ENCODE measurements at regions of chr6 and their contacts with region 1.

Region 1: GRCh38 chr6:35327349-35328027 is 14.9 kb upstream of the PPARD start:
- DNase-seq: peak; percentile 80
- ATAC-seq: peak; percentile 87
- H3K4me3 ChIP-seq: no peak overlapping the region
- H3K4me3 Mint-ChIP-seq: no peak overlapping the region
- H3K27ac ChIP-seq: peak overlapping the region in 1 of 2 donors; percentile 11
- H3K27ac Mint-ChIP-seq: peak overlapping the region; percentile 74
- H3K4me1 ChIP-seq: peaks cover 11 to 15% of the 10 kb centered on the region in 2 donors
- H3K4me1 Mint-ChIP-seq: peaks cover 16% of the 10 kb centered on the region
- H3K27me3 ChIP-seq: no peaks in the 10 kb centered on the region
- H3K27me3 Mint-ChIP-seq: no peaks in the 10 kb centered on the region
- CTCF ChIP-seq: peak; percentile 76

Region 2: DNA sequence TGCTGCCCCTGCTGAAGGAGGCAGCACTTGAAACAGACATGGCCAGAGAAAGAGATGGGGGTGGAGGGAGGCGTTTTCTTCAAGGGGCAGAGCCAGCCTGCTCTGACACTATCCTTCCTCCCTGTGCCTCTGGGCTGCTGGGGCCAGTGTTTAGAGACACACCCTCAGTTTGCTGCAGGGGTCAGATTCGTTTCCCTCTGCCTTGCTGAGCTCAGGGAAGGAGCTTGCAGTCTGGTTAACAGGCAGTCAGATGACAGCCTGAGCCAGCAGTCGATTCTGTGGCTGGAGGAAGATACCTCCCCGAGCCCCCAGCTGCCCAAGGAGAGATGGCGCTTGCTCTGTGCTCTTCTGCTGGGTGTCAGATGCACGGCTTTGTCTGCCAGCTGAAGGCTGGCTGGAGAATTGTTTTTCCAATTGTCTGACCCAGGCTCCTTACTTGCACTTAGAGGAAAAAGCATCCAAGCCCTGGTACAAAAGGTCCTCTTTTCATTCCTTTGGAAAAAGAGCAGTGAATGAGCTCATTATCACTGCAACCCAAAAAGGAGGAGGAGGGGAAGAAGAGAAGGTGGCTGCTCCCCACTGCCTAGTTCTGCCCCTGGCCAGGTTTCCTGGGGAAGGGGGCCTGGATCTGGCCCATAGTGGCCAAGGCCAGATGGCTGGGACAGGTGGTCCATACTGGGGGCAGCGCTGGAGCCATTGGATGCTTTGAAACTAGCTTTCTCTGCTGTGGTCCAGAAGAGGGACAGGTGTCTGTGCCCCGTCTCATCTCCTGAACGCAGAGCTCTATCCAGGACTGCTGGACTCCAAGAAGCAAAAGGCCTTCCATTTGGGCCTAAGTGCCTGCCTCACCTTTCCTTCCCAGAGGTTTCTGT is 274.6 kb before region 1 on chr6:
- CTCF ChIA-PET with region 1: no interaction called
- POLR2A ChIA-PET with region 1: no interaction called
- intact Hi-C with region 1: no loop called
- DNase-seq: no peak
- ATAC-seq: no peak
- H3K4me3 ChIP-seq: no peak overlapping the region
- H3K4me3 Mint-ChIP-seq: no peak overlapping the region
- H3K27ac ChIP-seq: no peak overlapping the region
- H3K27ac Mint-ChIP-seq: no peak overlapping the region
- H3K4me1 ChIP-seq: peaks cover 6 to 11% of the 10 kb centered on the region in 2 donors
- H3K4me1 Mint-ChIP-seq: no peaks in the 10 kb centered on the region
- H3K27me3 ChIP-seq: no peaks in the 10 kb centered on the region
- H3K27me3 Mint-ChIP-seq: no peaks in the 10 kb centered on the region
- CTCF ChIP-seq: no peak

Region 3: GRCh38 chr6:35259194-35259947 is 68.1 kb before region 1 on chr6 and contains the start of gene ZNF76:
- CTCF ChIA-PET with region 1: interaction called, 4 read pairs
- POLR2A ChIA-PET with region 1: no interaction called
- intact Hi-C with region 1: loop called (anchors 2 kb)
- DNase-seq: peak; percentile 97
- ATAC-seq: peak; percentile 81
- H3K4me3 ChIP-seq: peak within 1 kb of the TSS; percentile 63 to 90 (median 81)
- H3K4me3 Mint-ChIP-seq: peak within 1 kb of the TSS; percentile 99
- H3K27ac ChIP-seq: peak within 1 kb of the TSS; percentile 97 to 98
- H3K27ac Mint-ChIP-seq: peak within 1 kb of the TSS; percentile 98
- H3K4me1 ChIP-seq: peaks cover 21 to 30% of the 10 kb centered on the region in 2 donors
- H3K4me1 Mint-ChIP-seq: peaks cover 47% of the 10 kb centered on the region
- H3K27me3 ChIP-seq: no peaks in the 10 kb centered on the region
- H3K27me3 Mint-ChIP-seq: no peaks in the 10 kb centered on the region
- CTCF ChIP-seq: no peak
- total RNA-seq, gene ZNF76: 96.9 and 107 TPM in 2 replicates

Region 4: DNA sequence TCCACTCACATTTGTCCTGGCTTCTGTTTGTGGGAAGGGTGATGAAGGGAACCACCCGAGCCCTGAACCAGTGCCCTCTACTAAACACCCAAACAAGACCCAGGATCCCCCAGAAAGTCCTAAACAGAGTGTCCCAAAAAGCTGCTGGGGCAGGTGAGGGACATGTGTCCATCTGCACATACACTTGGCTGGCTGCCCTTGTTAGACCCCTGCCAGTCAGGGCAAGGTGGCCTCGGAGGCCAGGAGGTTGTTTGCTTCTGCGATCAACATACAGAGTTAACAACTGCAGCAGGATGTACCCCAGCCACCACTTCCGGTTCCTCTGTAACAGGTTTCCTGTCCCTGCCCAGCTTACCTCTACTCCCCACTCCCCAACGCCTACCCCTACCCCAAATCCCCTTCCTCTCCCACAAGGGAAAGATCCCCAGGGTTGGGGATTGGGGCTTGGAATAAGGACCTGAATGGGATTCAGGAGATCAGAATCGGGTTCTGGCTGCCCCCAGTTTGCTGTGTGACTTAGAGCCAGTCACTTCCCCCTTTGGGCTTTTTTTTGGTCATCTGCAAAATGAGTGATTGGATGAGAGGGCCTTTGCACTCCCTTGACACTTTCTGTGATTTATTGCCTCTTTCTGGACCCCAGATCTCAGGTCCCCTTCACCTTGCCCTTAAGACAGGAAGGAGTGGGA is 16.0 kb before region 1 on chr6:
- CTCF ChIA-PET with region 1: interaction called, 14 read pairs
- POLR2A ChIA-PET with region 1: interaction called, 7 read pairs
- intact Hi-C with region 1: loop called (anchors 1 kb)
- DNase-seq: peak; percentile 60
- ATAC-seq: peak; percentile 65
- H3K4me3 ChIP-seq: peak overlapping the region in 4 of 5 experiments; percentile 16 to 48 (median 44)
- H3K4me3 Mint-ChIP-seq: peak overlapping the region; percentile 81
- H3K27ac ChIP-seq: peak overlapping the region; percentile 78 to 89
- H3K27ac Mint-ChIP-seq: peak overlapping the region; percentile 99
- H3K4me1 ChIP-seq: peaks cover 41 to 44% of the 10 kb centered on the region in 2 donors
- H3K4me1 Mint-ChIP-seq: peaks cover 72% of the 10 kb centered on the region
- H3K27me3 ChIP-seq: no peaks in the 10 kb centered on the region
- H3K27me3 Mint-ChIP-seq: no peaks in the 10 kb centered on the region
- CTCF ChIP-seq: no peak

Measured in B cell (primary cell).